ENCODE measurements at regions of chr1 and their contacts with region 1.

Region 1: GRCh38 chr1:206479183-206480125 is 9.2 kb downstream of the IKBKE start:
- DNase-seq: peak; percentile 92
- H3K27ac ChIP-seq: no peak overlapping the region
- CTCF ChIP-seq: peak; percentile 82

Region 2: DNA sequence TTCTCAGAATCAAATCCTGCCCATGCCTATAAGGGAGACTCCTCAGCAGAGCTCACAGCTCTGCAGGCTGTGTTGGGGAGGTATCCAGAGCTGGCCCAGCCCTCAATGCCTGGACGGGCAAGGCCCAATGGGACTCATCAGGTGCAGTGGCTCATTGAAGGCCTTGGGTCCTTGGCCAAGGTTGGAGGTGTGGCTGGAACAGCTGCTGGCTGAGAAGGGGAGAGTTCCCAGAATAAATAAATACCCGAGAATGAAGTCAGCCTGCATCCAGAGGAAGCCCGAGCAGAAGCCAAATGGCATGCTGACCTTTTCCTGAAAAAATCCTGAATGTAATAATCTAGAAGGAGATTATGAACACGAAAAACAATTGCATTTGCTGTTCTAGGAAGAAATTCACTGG is 34.3 kb before region 1 on chr1:
- CTCF ChIA-PET with region 1: no interaction called
- POLR2A ChIA-PET with region 1: no interaction called
- DNase-seq: no peak
- H3K27ac ChIP-seq: no peak overlapping the region
- CTCF ChIP-seq: no peak

Region 3: GRCh38 chr1:206461602-206462455 is 17.6 kb before region 1 on chr1:
- CTCF ChIA-PET with region 1: interaction called, 10 read pairs
- POLR2A ChIA-PET with region 1: interaction called, 3 read pairs
- DNase-seq: peak; percentile 81
- H3K27ac ChIP-seq: no peak overlapping the region
- CTCF ChIP-seq: peak; percentile 88

Region 4: GRCh38 chr1:206489980-206490770 is 10.7 kb after region 1 on chr1:
- CTCF ChIA-PET with region 1: interaction called, 35 read pairs
- POLR2A ChIA-PET with region 1: no interaction called
- DNase-seq: peak; percentile 93
- H3K27ac ChIP-seq: no peak overlapping the region
- CTCF ChIP-seq: peak; percentile 95

Region 5: DNA sequence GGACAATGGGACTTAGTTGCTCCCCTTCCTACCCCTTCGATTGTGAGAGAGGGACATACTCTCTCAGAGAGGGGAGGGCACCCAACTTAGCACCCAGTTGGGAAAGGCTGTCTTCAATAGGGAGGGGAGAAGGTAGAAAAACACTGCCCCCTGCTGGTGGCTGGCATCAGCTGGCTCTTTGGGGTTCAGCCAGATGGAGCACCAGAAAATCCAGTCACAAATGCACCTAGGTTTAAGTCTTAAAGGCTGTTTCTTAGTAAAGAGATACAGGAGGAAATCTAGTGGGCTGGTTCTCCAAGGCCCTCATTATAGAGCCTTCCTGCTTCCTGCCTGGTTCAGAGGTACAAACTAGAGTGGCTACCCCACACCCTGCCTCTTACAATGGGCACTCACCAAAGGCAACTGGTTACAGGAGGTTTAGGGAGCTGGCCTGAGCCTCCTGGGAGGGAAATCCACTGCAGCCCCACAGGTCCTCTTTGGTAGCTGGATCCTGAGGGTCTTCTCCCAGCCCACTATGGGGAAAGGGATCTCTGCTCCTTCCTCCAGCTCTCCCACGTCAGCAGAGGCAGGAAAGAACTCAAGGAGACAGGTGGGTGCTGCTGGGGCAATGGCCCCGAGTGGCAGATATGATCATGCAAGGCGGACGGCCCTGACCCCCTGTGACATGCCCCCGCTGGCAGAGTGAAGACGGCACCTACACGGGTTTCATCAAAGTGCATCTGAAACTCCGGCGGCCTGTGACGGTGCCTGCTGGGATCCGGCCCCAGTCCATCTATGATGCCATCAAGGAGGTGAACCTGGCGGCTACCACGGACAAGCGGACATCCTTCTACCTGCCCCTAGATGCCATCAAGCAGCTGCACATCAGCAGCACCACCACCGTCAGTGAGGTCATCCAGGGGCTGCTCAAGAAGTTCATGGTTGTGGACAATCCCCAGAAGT is 104.5 kb after region 1 on chr1:
- CTCF ChIA-PET with region 1: interaction called, 12 read pairs
- POLR2A ChIA-PET with region 1: no interaction called
- DNase-seq: peak; percentile 67
- H3K27ac ChIP-seq: peak overlapping the region; percentile 36
- CTCF ChIP-seq: peak; percentile 75

Region 6: GRCh38 chr1:206589206-206589605 is 109.8 kb after region 1 on chr1:
- CTCF ChIA-PET with region 1: interaction called, 12 read pairs
- POLR2A ChIA-PET with region 1: no interaction called
- DNase-seq: peak; percentile 94
- H3K27ac ChIP-seq: peak overlapping the region; percentile 60
- CTCF ChIP-seq: no peak

Region 7: DNA sequence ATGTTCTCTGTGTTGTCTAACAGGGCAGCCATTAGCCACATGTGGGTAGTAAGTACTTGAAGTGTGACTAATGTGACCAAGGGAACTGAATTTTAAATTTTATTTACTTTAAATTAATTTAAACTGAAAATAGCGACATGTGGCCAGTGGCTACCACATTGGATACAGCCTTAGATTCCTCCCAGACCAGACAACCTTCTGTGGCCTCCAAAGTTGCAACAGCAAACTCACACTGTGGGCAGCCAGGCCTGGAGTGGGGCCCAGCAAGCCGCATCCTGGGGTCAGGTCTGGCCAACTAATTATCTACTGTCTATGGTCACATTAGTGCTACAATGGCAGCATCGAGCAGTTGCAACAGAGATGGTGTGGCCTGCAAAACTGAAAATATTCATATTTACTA is 121.1 kb after region 1 on chr1:
- CTCF ChIA-PET with region 1: interaction called, 10 read pairs
- POLR2A ChIA-PET with region 1: no interaction called
- DNase-seq: no peak
- H3K27ac ChIP-seq: no peak overlapping the region
- CTCF ChIP-seq: no peak

Region 8: GRCh38 chr1:206808615-206809014 is 329.2 kb after region 1 on chr1:
- CTCF ChIA-PET with region 1: interaction called, 10 read pairs
- POLR2A ChIA-PET with region 1: no interaction called
- DNase-seq: no peak
- H3K27ac ChIP-seq: no peak overlapping the region
- CTCF ChIP-seq: no peak